Prostate gland (tissue), 2 donors: ENCODE measurements at regions of chr2 and their contacts with region 1.

Region 1: DNA sequence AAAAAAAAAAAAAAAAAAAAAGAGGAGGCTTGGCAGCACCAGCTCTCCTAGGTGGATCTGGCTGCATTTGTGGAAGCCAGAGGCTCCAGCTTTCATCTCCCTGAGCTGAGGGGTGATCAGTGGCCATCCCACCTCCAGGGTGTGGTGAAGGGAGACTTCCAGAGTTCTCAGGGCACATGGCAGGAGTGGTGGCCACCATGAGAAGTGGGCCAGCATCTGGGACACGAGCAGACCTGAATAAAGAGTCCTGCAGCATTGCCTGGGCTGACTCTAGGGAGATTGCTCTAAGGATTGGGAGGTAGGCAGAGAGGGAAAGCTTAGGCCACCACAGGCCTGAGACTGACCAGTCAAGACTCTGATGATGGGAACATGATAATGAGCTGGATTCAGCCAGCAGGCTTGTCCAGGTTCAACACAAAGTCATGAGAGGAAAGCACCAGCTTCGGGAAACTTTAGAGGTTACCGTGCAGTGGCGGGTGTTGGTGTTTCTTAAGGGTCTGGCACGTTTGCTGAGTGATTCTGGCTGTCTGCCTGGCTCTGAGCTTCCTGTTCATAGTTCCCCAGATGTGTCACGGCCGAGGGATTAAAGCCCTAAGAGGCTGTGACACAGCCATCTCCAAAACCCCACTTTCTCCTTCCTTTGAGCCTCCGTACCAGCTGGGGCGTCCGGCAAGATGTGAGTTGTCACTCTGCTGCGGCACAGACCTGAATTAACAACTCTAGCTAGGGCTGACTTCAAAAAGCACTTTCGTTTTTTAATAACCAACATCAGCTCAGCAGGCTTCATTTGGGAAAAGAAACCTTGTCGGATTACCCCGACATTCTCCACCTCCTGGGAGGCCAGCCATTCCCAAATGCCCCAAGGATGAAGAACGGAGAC is 38.3 kb upstream of the IL1R1 start:
- DNase-seq: peak; percentile 69
- H3K4me3 ChIP-seq: peak overlapping the region; percentile 24 to 26
- H3K27ac ChIP-seq: peak overlapping the region; percentile 80 to 82
- H3K4me1 ChIP-seq: no peaks in the 10 kb centered on the region
- H3K27me3 ChIP-seq: no peaks in the 10 kb centered on the region
- CTCF ChIP-seq: no peak
- POLR2A ChIP-seq: no peak

Region 2: DNA sequence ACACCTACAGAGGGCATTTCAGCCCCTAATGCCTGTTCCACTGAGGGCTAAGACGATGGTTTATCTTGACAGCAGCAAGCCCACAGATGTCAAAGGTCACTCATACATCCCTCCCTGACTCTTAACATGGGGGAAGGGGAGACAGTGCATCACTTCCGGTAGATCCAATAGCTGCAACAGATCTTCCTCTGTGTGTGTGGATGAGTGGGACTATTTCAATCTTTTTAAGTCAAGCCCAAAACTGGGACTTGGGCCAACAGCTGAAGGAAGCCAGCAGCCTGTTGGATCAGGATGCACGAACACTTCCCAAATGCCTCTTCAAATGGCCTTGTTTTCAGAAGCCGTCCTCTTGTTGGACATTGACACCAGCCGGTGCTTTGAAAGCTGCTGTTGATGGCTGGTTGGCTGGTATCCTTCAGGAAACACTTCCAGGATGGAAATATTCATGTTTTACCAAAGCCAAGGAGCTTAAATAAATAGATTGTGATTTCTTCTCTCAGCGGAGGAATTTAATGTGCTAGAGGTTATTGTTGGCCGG is 53.3 kb before region 1 on chr2:
- intact Hi-C with region 1: loop called (anchors 5 kb)
- DNase-seq: peak; percentile 71
- H3K4me3 ChIP-seq: no peak overlapping the region
- H3K27ac ChIP-seq: peak overlapping the region; percentile 77 to 82
- H3K4me1 ChIP-seq: peaks cover 11% of the 10 kb centered on the region
- H3K27me3 ChIP-seq: no peaks in the 10 kb centered on the region
- CTCF ChIP-seq: no peak
- POLR2A ChIP-seq: no peak

Region 3: DNA sequence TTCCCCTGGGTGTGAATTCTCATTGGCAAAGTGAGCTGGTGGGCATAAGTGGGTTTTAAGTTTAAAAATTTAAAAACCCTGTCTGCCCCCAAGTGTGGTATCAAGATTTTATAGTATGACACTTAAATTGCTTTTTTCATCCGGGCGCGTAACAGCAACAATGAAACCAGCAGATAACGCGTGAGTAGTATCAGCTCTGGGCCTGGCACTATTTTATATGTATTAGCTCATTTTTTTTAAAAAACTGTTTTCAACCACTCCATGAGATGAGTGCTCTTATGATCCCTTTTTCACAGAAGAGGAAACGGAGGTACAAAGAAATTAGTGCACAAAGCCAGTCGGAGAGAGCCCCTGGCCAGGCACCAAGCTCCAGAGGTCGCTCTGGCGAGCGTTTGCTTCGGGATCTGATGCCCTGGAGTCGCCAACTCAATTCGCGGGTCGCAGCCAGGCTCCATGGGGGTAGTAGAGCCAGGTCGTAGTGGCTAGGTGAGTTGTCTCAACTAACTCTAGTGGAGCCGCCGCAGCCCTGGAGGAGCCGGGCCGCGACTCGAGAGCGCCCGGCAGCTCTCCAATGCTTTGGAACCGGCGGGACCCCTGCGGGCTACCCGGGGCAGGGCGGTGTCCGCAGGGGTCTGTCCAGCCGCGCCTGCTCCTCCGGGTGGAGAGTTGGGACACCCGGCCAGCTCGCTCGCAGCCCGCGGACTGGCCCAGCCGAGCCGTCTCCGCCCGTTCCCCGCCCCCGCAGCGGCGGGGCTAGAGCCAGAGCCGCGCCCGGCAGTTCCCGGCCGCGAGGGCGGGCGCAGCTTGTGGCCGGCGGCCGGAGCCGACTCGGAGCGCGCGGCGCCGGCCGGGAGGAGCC is 38.0 kb after region 1 on chr2 and contains the start of gene IL1R1:
- intact Hi-C with region 1: loop called (anchors 2 kb)
- DNase-seq: peak; percentile 62
- H3K4me3 ChIP-seq: peak within 1 kb of the TSS; percentile 67 to 75
- H3K27ac ChIP-seq: peak within 1 kb of the TSS; percentile 98
- H3K4me1 ChIP-seq: peaks cover 5% of the 10 kb centered on the region
- H3K27me3 ChIP-seq: no peaks in the 10 kb centered on the region
- CTCF ChIP-seq: no peak
- POLR2A ChIP-seq: peak; percentile 73
- total RNA-seq, gene IL1R1: 112 to 289 TPM

Region 4: DNA sequence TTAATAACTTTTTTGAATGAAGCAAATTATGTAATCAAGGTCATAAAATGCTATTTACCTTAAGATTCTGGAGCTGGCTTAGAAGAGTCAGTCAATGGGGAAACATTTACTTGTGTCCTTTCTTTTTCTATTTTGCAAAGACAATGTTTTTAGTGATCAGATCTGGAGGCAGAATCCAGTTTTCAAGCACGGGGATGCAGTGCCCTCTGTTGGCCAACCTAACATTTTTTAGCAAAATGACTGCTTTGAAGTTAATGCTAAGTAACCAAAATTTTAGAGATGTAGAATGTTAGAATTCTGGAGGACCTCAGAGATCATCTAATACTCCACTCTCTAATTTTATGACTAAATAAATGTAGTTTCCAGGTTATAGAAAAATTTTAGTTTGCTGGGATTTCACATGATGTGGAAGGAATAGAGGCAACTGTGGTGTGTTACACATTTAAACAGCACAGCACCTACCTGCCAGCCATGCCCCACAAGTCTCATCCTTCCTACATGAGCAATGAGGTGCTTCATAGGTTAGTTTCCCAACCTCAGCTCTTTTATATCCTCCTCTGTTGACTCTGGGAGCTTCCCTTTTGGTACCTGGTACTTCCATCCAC is 345.2 kb after region 1 on chr2:
- intact Hi-C with region 1: no loop called
- DNase-seq: peak; percentile 24
- H3K4me3 ChIP-seq: no peak overlapping the region
- H3K27ac ChIP-seq: no peak overlapping the region
- H3K4me1 ChIP-seq: no peaks in the 10 kb centered on the region
- H3K27me3 ChIP-seq: no peaks in the 10 kb centered on the region
- CTCF ChIP-seq: peak in 3 of 4 experiments; percentile 42 to 56 (median 55)
- POLR2A ChIP-seq: no peak